ENCODE measurements at regions of chr1 and their contacts with region 1.

Region 1: GRCh38 chr1:63593303-63593885 is at the start of gene PGM1:
- DNase-seq: peak; percentile 68
- H3K4me3 Mint-ChIP-seq: peak within 1 kb of the TSS; percentile 95
- H3K27ac Mint-ChIP-seq: peak within 1 kb of the TSS; percentile 98
- H3K4me1 Mint-ChIP-seq: peaks cover 44% of the 10 kb centered on the region
- H3K27me3 Mint-ChIP-seq: no peaks in the 10 kb centered on the region
- total RNA-seq, gene PGM1: 38.9 and 39.8 TPM in 2 replicates

Region 2: DNA sequence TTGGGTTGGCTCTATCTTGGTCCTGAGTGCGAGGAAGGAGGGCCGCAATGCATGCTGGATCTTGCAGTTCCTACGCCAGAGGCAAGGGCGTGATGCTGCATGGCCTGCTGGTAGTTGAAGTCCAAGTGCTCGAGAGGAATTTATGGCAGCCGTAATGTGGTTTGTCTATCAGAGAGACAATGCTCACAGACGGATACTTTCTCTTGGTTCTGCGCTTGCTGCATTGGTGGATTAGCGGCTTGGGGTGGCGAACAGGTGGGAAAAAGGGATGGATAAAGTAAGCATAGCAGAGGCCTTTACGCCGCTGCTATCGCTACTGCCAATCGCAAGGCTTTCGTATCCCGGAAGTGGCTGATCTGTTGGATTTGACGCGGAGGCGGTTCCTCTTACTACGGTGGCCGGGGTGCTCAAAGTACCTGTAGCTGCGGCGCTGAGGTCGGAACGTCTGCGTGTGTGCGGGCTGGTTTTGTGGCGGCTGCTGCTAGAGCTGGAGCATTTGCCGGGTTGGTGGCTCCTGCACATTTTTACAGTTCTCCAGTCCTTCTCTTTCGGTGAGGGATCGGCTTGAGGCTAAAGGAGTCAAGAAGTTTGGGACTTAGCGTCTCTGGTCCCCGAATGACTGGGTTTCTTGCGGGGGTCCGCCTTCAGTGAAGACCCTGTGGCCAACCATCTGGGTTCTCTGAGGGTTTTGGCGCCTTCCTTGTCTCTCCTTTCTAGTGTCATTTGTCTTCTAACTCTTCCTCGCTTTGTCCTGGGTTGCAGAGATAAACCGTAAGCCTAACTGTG is 809.5 kb before region 1 on chr1 and contains the start of gene ATG4C:
- intact Hi-C with region 1: loop called (anchors 5 kb)
- DNase-seq: peak; percentile 90
- H3K4me3 Mint-ChIP-seq: no peak within 1 kb of the TSS
- H3K27ac Mint-ChIP-seq: no peak within 1 kb of the TSS
- H3K4me1 Mint-ChIP-seq: peaks cover 8% of the 10 kb centered on the region
- H3K27me3 Mint-ChIP-seq: peaks cover 4% of the 10 kb centered on the region
- total RNA-seq, gene ATG4C: 8.8 TPM in 2 replicates

Region 3: GRCh38 chr1:63367215-63368103 is 225.9 kb before region 1 on chr1 and contains the start of gene ALG6:
- intact Hi-C with region 1: loop called (anchors 1 kb)
- DNase-seq: peak; percentile 93
- H3K4me3 Mint-ChIP-seq: peak within 1 kb of the TSS; percentile 90
- H3K27ac Mint-ChIP-seq: peak within 1 kb of the TSS; percentile 74
- H3K4me1 Mint-ChIP-seq: peaks cover 16% of the 10 kb centered on the region
- H3K27me3 Mint-ChIP-seq: peaks cover under 1% of the 10 kb centered on the region
- total RNA-seq, gene ALG6: 25.8 and 26.9 TPM in 2 replicates

Region 4: GRCh38 chr1:63522891-63523728 is 70.3 kb before region 1 on chr1 and contains the starts of genes EFCAB7 and ITGB3BP:
- intact Hi-C with region 1: loop called (anchors 1 kb)
- DNase-seq: peak; percentile 80
- H3K4me3 Mint-ChIP-seq: peak within 1 kb of the TSS; percentile 99
- H3K27ac Mint-ChIP-seq: peak within 1 kb of the TSS; percentile 94
- H3K4me1 Mint-ChIP-seq: peaks cover 53% of the 10 kb centered on the region
- H3K27me3 Mint-ChIP-seq: no peaks in the 10 kb centered on the region
- total RNA-seq, gene EFCAB7: 6.4 and 6.7 TPM in 2 replicates
- total RNA-seq, gene ITGB3BP: 44.1 and 49.8 TPM in 2 replicates

Region 5: DNA sequence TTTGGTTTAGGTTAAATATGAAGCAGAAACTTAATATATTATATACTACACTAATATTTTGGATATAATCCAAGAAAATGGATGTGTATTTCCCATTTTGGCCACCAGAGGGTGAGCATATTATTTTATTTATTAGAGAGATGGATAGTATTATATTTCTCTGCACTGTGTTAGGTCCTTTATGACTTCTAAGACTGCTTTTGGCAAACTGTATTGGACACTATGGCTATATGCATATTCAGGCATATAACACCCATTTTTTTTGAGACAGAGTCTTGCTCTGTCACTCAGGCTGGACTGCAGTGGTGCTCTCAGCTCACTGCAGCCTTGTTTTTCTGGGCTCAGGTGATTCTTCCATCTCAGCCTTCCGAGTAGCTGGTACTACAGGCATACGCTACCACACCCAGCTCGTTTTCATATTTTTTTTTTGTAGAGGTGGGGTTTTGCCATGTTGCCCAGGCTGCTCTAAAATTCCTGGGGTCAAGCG is 18.0 kb before region 1 on chr1:
- intact Hi-C with region 1: loop called (anchors 1 kb)
- DNase-seq: no peak
- H3K4me3 Mint-ChIP-seq: no peak overlapping the region
- H3K27ac Mint-ChIP-seq: no peak overlapping the region
- H3K4me1 Mint-ChIP-seq: no peaks in the 10 kb centered on the region
- H3K27me3 Mint-ChIP-seq: no peaks in the 10 kb centered on the region

Region 6: GRCh38 chr1:63773815-63774616 is 180.6 kb after region 1 on chr1 and contains the start of gene ROR1:
- intact Hi-C with region 1: loop called (anchors 10 kb)
- DNase-seq: peak; percentile 43
- H3K4me3 Mint-ChIP-seq: peak within 1 kb of the TSS; percentile 85
- H3K27ac Mint-ChIP-seq: peak within 1 kb of the TSS; percentile 53
- H3K4me1 Mint-ChIP-seq: peaks cover 22% of the 10 kb centered on the region
- H3K27me3 Mint-ChIP-seq: peaks cover 62% of the 10 kb centered on the region
- total RNA-seq, gene ROR1: 0.05 TPM in 1 of 2 replicates, not detected in the other